ENCODE measurements at regions of chr1 and their contacts with region 1.

Region 1: GRCh38 chr1:43073490-43074230 is 98.4 kb downstream of the EBNA1BP2 start:
- DNase-seq: peak; percentile 79
- H3K4me3 ChIP-seq: no peak overlapping the region
- H3K27ac ChIP-seq: no peak overlapping the region
- H3K4me1 ChIP-seq: no peaks in the 10 kb centered on the region
- H3K27me3 ChIP-seq: no peaks in the 10 kb centered on the region
- CTCF ChIP-seq: peak; percentile 75 to 83
- POLR2A ChIP-seq: no peak

Region 2: DNA sequence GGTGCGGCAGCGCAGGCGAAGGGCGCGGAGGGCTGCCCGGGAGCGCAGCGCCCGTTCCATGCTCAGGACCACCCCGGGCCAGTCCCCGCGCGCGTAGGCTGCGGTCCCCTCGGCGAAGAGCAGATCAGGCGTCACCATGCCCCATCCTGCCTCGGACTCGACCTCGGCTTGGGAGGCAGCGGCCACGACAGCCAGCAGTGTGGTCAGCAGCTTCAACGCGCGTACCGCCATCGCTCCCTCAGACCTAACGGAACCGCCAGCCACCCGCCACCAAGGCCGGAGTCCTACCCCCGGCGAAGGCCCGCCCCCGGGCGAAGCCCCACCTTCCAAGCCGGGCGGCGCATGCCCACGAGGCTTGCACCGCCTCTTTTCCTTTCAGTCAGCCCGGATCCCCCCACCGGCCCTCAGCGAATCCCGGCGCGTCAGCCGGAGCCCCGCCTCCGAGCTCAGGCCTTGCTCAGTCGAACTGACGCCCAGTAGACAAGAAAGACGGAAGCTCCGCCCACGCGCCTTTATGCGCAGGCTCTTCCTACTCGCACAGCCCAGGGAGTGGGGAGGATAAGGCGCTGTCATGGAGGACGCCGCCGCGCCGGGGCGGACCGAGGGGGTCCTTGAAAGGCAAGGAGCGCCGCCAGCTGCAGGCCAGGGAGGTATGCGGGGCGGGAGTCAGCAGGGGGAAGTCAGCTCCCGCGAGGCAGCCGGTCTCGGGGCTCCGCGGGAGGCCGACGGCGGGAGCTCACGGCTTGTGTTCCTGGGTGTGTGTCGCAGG is 306.7 kb before region 1 on chr1 and contains the starts of genes C1orf50 and P3H1:
- CTCF ChIA-PET with region 1: interaction called, 14 read pairs
- POLR2A ChIA-PET with region 1: no interaction called
- dilution Hi-C with region 1: no loop called
- intact Hi-C with region 1: no loop called
- DNase-seq: peak; percentile 100
- H3K4me3 ChIP-seq: peak within 1 kb of the TSS; percentile 65 to 91 (median 90)
- H3K27ac ChIP-seq: peak within 1 kb of the TSS; percentile 62
- H3K4me1 ChIP-seq: peaks cover 20% of the 10 kb centered on the region
- H3K27me3 ChIP-seq: no peaks in the 10 kb centered on the region
- CTCF ChIP-seq: no peak
- POLR2A ChIP-seq: peak; percentile 92
- total RNA-seq, gene C1orf50: 4.0 and 7.4 TPM in 2 replicates
- total RNA-seq, gene P3H1: 136 and 146 TPM in 2 replicates

Region 3: DNA sequence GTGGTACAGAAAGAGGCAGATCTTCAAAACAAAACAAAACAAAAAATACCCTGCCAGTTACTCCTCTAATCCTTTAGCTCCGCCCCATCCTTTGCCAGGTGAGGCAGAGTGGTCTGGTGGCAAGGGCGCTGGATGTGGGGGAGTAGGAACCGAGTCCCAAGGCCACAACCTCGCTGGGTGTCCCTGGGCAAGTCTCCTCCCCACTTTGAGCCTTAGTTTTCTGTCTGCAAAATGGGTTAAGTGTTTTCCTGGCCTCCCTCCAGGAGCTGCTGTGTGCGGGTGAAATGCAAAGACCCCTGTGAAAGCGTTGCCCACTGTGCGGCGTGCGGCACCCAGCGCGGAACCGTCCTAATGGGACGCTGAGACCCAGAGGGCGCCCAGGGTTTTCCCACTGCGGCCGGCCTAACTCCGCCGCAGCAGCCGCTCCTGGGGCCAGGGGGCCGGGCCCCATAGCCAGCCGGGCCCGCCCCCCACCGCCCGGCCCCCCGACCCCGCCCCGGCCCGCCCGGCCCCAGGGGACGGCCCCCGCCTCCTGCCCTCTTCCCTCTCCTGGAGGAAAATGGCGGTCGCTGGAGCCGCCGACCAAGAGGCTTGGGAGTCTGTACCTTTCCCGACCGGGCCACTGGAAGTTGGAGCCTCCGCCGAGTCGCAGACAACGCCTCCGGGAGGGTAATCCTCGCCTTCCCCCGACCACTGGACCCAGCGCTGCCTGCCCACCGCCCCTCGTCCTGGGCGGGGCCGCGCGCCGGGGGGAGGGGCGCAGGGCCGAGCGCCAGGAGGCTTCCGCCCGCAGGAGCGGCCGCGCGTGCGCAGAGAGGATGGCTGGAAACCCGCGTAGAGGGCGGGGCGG is 256.9 kb before region 1 on chr1 and contains the starts of genes ERMAP and SVBP:
- CTCF ChIA-PET with region 1: interaction called, 17 read pairs
- POLR2A ChIA-PET with region 1: no interaction called
- dilution Hi-C with region 1: no loop called
- intact Hi-C with region 1: no loop called
- DNase-seq: peak; percentile 89
- H3K4me3 ChIP-seq: peak within 1 kb of the TSS; percentile 73 to 87 (median 74)
- H3K27ac ChIP-seq: peak within 1 kb of the TSS; percentile 91
- H3K4me1 ChIP-seq: peaks cover 18% of the 10 kb centered on the region
- H3K27me3 ChIP-seq: no peaks in the 10 kb centered on the region
- CTCF ChIP-seq: no peak
- POLR2A ChIP-seq: peak; percentile 89
- total RNA-seq, gene ERMAP: 7.8 and 7.9 TPM in 2 replicates
- total RNA-seq, gene SVBP: 24.1 and 24.7 TPM in 2 replicates

Region 4: GRCh38 chr1:42924082-42924850 is 149.4 kb before region 1 on chr1:
- CTCF ChIA-PET with region 1: interaction called, 1,298 read pairs
- POLR2A ChIA-PET with region 1: no interaction called
- dilution Hi-C with region 1: loop called (anchors 25 kb)
- intact Hi-C with region 1: loop called (anchors 1 kb)
- DNase-seq: peak; percentile 91
- H3K4me3 ChIP-seq: peak overlapping the region; percentile 63 to 87 (median 81)
- H3K27ac ChIP-seq: peak overlapping the region; percentile 75
- H3K4me1 ChIP-seq: peaks cover 10% of the 10 kb centered on the region
- H3K27me3 ChIP-seq: no peaks in the 10 kb centered on the region
- CTCF ChIP-seq: no peak
- POLR2A ChIP-seq: peak; percentile 85

Region 5: DNA sequence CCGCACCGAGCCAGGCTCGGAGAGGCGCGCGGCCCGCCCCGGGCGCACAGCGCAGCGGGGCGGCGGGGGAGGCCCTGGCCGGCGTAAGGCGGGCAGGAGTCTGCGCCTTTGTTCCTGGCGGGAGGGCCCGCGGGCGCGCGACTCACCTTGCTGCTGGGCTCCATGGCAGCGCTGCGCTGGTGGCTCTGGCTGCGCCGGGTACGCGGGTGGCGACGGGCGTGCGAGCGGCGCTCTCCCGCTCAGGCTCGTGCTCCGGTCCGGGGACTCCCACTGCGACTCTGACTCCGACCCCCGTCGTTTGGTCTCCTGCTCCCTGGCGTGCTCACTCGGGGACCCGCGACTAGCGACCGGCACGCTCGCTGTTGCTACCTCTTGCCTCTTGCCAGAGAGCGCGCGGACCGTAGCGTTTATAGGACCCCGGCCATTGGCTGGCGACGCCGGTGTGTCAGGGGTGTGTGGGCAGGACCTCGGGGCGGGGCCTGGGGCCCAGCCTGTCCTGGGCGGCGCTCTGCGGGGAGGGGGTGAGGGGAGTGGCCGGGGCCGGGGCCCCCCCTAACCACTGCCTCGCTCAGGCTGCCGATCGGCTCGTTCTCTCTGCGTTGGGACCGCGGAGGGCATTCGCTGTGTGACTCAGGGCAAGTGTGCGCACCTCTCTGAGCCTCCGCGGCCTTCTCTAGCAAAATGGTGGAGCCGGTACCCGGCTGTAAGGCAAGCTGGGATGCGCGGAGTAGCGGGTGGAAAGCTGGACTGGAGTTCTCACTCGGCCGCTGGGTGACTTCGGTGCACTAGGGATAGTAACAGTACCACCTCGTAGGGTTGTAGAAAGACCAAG is 115.0 kb before region 1 on chr1 and contains the start of gene SLC2A1:
- CTCF ChIA-PET with region 1: interaction called, 23 read pairs
- POLR2A ChIA-PET with region 1: no interaction called
- dilution Hi-C with region 1: no loop called
- intact Hi-C with region 1: no loop called
- DNase-seq: peak; percentile 94
- H3K4me3 ChIP-seq: peak within 1 kb of the TSS; percentile 43 to 79 (median 57)
- H3K27ac ChIP-seq: peak within 1 kb of the TSS; percentile 68
- H3K4me1 ChIP-seq: peaks cover 16% of the 10 kb centered on the region
- H3K27me3 ChIP-seq: no peaks in the 10 kb centered on the region
- CTCF ChIP-seq: no peak
- POLR2A ChIP-seq: peak; percentile 73
- total RNA-seq, gene SLC2A1: 38.7 and 42.2 TPM in 2 replicates

Region 6: DNA sequence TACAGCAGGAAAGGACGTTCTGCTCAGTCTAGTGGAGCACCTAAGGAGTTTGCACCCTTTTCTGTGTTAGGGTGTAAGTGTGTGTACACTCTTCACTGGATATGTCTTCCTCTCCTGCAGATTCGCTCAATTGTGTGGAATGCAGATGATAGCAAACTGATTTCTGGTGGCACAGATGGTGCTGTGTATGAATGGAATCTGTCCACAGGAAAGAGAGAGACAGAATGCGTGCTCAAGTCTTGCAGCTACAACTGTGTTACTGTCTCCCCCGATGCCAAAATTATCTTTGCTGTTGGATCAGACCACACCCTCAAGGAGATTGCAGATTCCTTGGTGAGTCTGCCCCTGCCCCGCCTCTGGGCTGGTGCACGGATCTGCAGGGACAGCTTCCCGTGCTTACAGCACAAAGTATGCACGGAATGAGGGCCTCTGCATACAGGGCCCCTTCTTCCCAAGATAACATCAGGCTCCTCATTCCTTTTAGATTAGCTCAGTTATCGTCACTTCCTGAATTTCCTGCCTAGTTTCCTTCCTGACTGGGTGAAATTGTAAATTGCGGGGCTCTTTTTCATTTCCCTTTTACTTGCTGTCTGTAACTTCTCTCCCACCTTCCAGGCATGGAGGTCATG is 133.1 kb after region 1 on chr1:
- CTCF ChIA-PET with region 1: interaction called, 15 read pairs
- POLR2A ChIA-PET with region 1: no interaction called
- dilution Hi-C with region 1: no loop called
- intact Hi-C with region 1: no loop called
- DNase-seq: no peak
- H3K4me3 ChIP-seq: peak overlapping the region in 1 of 3 experiments; percentile 7
- H3K27ac ChIP-seq: peak overlapping the region; percentile 97
- H3K4me1 ChIP-seq: peaks cover 27% of the 10 kb centered on the region
- H3K27me3 ChIP-seq: no peaks in the 10 kb centered on the region
- CTCF ChIP-seq: no peak
- POLR2A ChIP-seq: peak; percentile 92

Measured in endothelial cell of umbilical vein (primary cell).